Activated CD4-positive, alpha-beta memory T cell treated with anti-CD3 and anti-CD28 coated beads for 36 hours (primary cell): ENCODE measurements at regions of chr3 and their contacts with region 1.

Region 1: DNA sequence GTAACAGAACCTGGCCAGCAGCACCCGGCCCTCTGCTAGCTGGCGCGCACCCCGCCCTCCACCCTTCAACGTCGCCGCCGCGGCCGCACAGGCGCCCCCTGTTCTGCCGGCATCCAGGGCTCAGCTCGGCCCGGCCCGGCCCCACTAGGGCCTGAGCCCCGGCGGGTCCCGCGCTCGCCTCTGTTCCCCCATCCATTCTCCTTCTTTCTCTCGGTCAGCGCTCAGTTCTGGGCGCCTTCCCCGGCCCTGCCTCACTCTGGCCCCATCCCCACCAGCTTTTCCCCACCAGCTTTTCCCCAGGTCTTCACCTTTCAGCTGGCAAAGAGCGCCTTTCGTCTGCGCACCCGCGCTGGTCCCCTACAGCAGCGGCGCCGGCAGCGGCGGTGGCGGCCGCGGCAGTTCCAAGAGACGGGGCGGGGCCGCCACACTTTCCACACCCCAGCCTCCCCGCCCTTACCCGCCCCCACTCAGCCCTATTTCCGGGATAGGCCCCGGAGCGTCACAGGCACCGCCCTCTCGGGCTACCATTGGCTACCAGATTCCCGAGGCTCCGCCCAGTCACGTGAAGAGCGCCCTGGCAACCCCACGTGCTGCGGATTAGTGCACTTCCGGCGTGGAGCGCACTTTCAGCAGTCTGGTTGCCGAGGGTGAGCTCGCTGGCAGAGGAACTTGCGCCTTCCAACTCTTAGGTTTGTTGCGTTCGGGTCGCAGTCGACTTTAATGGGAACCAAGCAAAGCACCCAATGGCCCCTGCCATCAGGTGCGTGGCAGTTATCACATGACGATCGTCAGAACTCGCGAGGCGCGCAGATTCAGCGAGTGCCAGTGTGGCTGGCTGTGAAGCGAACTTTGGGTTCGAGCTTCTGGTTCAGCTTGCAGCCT is at the start of gene EIF5A2:
- DNase-seq: peak; percentile 97
- H3K4me3 Mint-ChIP-seq: peak within 1 kb of the TSS; percentile 93
- H3K27ac Mint-ChIP-seq: peak within 1 kb of the TSS; percentile 69
- H3K4me1 Mint-ChIP-seq: peaks cover 20% of the 10 kb centered on the region
- H3K27me3 Mint-ChIP-seq: no peaks in the 10 kb centered on the region
- total RNA-seq, gene EIF5A2: 5.7 to 8.7 TPM

Region 2: DNA sequence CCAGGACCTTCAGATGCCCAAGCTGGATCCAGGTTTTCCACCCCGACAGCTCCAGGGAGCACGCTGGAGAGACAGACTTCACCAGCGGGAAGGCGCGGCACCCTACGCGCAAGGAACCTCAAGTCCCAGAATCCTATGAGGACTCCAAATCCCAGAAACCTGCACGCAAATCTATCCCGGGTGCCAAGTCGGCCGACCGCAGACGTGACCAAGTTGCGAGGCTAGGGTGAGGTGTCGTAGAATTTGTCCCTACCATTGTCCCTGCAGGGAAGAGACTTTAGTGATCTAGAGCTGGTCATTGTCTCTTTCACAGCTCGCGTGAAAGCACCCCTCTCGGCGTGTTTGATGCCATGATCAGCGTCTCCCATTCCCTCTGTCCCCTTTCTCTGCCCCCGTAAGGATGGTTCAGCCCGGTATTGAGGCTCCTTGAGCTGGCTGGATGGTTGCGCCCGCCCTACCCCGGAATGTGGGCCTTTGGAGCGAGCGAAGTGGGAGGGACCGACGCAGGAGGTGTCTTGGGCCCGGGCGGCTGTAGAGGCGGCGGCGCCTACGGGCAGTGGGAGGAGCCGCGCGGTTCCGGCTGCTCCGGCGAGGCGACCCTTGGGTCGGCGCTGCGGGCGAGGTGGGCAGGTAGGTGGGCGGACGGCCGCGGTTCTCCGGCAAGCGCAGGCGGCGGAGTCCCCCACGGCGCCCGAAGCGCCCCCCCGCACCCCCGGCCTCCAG is 686.4 kb before region 1 on chr3 and contains the start of gene PRKCI:
- CTCF ChIA-PET with region 1: no interaction called
- POLR2A ChIA-PET with region 1: no interaction called
- intact Hi-C with region 1: loop called (anchors 1 kb)
- DNase-seq: peak; percentile 95
- H3K4me3 Mint-ChIP-seq: peak within 1 kb of the TSS; percentile 93
- H3K27ac Mint-ChIP-seq: peak within 1 kb of the TSS; percentile 91
- H3K4me1 Mint-ChIP-seq: peaks cover 25% of the 10 kb centered on the region
- H3K27me3 Mint-ChIP-seq: no peaks in the 10 kb centered on the region
- total RNA-seq, gene PRKCI: 27.0 to 27.6 TPM

Region 3: DNA sequence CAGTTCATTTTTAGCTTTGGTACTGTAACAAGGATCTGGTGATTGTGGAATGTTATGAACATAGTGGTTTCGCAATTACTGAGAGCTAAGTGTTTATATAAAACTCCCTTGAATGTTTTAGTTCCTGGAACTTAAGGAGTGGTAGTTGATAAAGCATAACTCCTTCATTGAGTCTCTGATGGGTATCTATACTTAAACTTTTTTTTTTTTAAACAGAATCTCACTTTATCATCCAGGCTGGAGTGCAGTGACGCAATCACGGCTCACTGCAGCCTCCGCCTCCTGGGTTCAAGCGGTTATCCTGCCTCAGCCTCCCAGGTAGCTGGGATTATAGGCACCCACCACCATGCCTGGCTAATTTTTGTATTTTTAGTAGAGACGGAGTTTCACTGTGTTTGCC is 674.9 kb before region 1 on chr3:
- CTCF ChIA-PET with region 1: no interaction called
- POLR2A ChIA-PET with region 1: no interaction called
- intact Hi-C with region 1: no loop called
- DNase-seq: no peak
- H3K4me3 Mint-ChIP-seq: no peak overlapping the region
- H3K27ac Mint-ChIP-seq: no peak overlapping the region
- H3K4me1 Mint-ChIP-seq: peaks cover 4% of the 10 kb centered on the region
- H3K27me3 Mint-ChIP-seq: no peaks in the 10 kb centered on the region

Region 4: DNA sequence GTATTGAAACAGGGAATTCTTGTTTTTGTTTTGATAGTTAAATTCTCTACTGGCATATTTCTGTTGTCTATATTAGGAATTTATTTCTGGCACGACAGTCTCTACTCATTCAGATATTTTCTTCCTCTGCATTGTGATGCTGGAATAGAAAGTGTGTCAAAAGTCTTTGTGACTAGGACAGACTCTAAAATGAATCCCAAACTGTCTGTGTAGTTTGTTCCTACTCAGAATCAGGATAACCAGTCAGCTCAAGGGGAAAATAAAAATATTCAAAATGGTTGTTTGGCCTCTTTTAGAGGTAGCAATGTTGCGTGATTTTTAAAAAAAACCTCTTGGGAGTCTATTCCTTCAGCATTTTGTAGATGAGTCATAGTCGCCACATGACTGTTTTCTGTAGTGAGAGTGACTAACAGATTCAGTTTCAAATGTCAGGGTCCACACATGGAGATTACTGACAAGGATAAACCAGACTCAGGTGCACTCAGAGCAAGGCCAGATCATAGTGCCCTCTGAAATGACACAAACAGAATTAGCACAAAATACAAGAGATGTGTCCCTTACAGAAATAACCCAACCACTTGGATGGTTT is 335.7 kb before region 1 on chr3:
- CTCF ChIA-PET with region 1: no interaction called
- POLR2A ChIA-PET with region 1: no interaction called
- intact Hi-C with region 1: loop called (anchors 5 kb)
- DNase-seq: peak; percentile 35
- H3K4me3 Mint-ChIP-seq: no peak overlapping the region
- H3K27ac Mint-ChIP-seq: no peak overlapping the region
- H3K4me1 Mint-ChIP-seq: peaks cover 20% of the 10 kb centered on the region
- H3K27me3 Mint-ChIP-seq: peaks cover 21% of the 10 kb centered on the region

Region 5: DNA sequence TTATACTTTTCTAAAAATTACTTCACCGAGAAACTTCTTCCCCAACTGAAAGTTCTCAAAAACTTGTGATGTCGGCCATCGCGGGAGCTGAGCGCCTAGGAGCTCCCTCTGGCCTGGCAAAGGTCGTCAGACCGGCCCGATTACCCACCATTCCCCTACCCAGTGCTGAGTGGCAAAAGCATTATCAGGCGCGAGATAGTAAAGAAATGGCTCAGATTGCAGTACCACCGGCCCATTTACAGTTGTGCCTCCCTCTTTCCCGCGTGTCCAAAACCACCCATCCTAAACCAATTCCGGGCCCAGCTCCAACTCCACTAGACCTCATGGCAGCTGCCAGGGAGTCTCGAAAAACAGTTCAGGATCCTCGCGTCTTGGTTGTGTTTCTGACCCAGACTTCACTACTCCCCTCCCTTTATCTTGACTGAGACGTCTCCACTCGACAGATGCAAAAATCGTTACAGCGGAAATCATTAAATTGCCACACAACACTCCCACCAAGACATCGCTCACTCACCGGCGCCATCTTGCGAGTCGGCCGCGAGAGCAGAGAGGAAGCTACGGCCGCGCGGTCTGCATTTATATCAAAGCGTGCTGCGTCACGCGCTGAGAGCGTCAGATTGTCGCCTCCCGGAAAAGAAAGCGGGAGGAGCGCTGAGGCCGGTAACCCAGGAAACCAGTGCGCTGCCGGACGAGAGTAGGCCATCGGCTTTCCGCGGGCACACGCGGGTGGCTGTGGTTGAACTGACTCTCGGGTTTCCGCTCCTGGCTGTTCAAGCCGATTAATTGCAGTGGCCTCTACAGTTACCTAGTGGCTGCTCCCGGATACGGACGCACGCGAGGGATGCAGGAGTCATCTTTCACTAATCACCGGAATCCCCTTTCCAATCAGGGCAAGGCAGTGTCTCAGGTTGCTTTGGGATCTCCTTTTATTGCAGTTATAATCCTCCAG is 38.6 kb before region 1 on chr3 and contains the start of gene RPL22L1:
- CTCF ChIA-PET with region 1: interaction called, 6 read pairs
- POLR2A ChIA-PET with region 1: interaction called, 25 read pairs
- intact Hi-C with region 1: loop called (anchors 1 kb)
- DNase-seq: peak; percentile 95
- H3K4me3 Mint-ChIP-seq: peak within 1 kb of the TSS; percentile 97
- H3K27ac Mint-ChIP-seq: peak within 1 kb of the TSS; percentile 98
- H3K4me1 Mint-ChIP-seq: peaks cover 22% of the 10 kb centered on the region
- H3K27me3 Mint-ChIP-seq: no peaks in the 10 kb centered on the region
- total RNA-seq, gene RPL22L1: 379 to 382 TPM

Region 6: GRCh38 chr3:171028025-171028778 is 119.7 kb after region 1 on chr3:
- CTCF ChIA-PET with region 1: no interaction called
- POLR2A ChIA-PET with region 1: no interaction called
- intact Hi-C with region 1: loop called (anchors 1 kb)
- DNase-seq: peak; percentile 80
- H3K4me3 Mint-ChIP-seq: no peak overlapping the region
- H3K27ac Mint-ChIP-seq: no peak overlapping the region
- H3K4me1 Mint-ChIP-seq: no peaks in the 10 kb centered on the region
- H3K27me3 Mint-ChIP-seq: peaks cover 14% of the 10 kb centered on the region